K562 (cell line): ENCODE measurements at regions of chr11 and their contacts with region 1.

Region 1: GRCh38 chr11:46593550-46594373 is at the start of gene AMBRA1:
- DNase-seq: peak; percentile 76 to 96 (median 82)
- ATAC-seq: peak; percentile 86
- H3K4me3 ChIP-seq: peak within 1 kb of the TSS; percentile 97
- H3K27ac ChIP-seq: peak within 1 kb of the TSS; percentile 78
- H3K4me1 ChIP-seq: peaks cover 25 to 38% of the 10 kb centered on the region in 2 experiments
- H3K27me3 ChIP-seq: no peaks in the 10 kb centered on the region
- CTCF ChIP-seq: peak in 1 of 3 experiments; percentile 7; a peak in 1 of 6 replicates
- EP300 ChIP-seq: peak; percentile 61
- POLR2A ChIP-seq: peak; percentile 84
- RAD21 ChIP-seq: no peak; a peak in 1 of 4 replicates
- polyA plus RNA-seq, gene AMBRA1: 0.15 to 0.39 TPM

Region 2: DNA sequence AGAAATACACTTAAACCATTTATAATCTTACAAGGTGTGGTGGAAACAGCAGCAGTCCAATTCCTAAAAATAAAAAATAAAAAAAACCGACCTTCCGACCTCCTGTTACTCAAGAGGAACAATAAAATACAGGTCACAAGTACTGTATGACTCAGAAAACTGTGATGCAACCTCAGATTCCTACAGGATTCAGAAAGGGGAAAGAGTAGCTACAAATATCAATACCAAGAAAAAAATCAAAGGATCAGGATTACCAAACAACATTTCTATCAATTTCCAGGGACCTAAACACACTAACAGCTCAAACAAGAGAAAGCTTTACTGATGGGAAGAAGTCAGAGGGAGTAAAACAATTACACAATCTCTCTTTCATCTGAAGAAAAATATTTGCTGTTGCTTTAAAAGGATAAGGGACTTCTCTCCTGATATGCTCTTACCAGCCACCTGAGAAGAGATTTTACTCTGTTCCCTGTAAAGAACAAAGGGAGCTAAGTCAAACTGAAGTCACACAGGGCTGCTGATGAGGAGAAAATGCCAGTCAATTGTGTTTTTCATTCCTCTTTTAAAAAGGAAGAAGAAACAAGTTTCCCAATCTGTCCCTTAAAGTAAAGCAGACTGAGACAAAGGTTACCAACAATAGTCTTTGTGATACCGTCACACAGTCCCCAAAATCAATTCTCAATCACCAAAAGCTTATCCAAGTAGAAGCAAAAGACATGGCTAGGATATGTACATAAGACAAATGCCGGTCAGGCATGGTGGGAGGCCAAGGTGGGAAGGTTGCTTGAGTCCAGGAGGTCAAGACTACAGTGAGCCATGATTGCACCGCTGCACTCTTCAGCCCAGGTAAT is 39.3 kb before region 1 on chr11:
- CTCF ChIA-PET with region 1: no interaction called
- POLR2A ChIA-PET with region 1: interaction called, 14 read pairs
- in situ Hi-C with region 1: no loop called
- intact Hi-C with region 1: loop called (anchors 5 kb)
- DNase-seq: no peak
- ATAC-seq: peak; percentile 25
- H3K4me3 ChIP-seq: no peak overlapping the region
- H3K27ac ChIP-seq: peak overlapping the region; percentile 42; the same call in 2 of the 3 replicates
- H3K4me1 ChIP-seq: peaks cover 25 to 48% of the 10 kb centered on the region in 2 experiments
- H3K27me3 ChIP-seq: no peaks in the 10 kb centered on the region
- CTCF ChIP-seq: no peak
- EP300 ChIP-seq: 0 out of 2 replicates have a peak, but pooled peaks have one; percentile 50
- POLR2A ChIP-seq: no peak
- RAD21 ChIP-seq: no peak

Region 3: DNA sequence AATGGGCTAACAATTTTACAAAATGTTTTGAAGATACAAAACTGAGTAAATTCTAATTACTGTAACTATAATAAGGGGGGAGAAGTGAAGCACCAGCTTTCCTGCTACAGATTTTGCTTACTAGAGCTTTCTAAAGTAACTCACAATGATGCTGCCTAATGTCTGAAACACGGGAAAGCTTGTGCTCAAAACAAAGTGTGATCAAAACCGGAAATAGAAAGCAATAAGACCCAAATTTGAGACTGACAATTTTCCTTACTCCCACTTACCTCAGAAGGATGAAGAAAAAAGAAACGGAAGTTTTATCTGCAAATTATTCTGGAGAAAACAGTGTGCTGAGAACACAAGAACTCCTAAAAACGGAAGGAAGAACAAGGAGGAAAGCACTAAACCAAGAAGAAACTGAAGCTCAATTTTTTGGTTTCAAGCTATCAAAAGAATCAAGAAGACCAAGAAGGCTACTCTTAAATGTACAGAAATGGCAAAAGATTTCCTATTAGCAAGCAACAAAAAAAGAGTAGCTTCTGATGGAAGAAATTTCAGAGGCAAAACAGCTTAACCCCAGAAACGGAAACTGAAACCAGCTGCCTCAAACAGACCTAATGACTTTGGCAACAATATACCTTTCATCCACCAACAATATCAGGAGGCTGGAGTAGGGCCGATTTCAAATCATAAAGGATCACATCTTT is 33.3 kb before region 1 on chr11:
- CTCF ChIA-PET with region 1: no interaction called
- POLR2A ChIA-PET with region 1: interaction called, 14 read pairs
- in situ Hi-C with region 1: no loop called
- intact Hi-C with region 1: loop called (anchors 5 kb)
- DNase-seq: peak in 1 of 4 experiments; percentile 29
- ATAC-seq: peak; percentile 39
- H3K4me3 ChIP-seq: peak overlapping the region; percentile 20
- H3K27ac ChIP-seq: peak overlapping the region; percentile 70
- H3K4me1 ChIP-seq: peaks cover 17 to 27% of the 10 kb centered on the region in 2 experiments
- H3K27me3 ChIP-seq: no peaks in the 10 kb centered on the region
- CTCF ChIP-seq: no peak
- EP300 ChIP-seq: no peak
- POLR2A ChIP-seq: no peak
- RAD21 ChIP-seq: no peak

Region 4: DNA sequence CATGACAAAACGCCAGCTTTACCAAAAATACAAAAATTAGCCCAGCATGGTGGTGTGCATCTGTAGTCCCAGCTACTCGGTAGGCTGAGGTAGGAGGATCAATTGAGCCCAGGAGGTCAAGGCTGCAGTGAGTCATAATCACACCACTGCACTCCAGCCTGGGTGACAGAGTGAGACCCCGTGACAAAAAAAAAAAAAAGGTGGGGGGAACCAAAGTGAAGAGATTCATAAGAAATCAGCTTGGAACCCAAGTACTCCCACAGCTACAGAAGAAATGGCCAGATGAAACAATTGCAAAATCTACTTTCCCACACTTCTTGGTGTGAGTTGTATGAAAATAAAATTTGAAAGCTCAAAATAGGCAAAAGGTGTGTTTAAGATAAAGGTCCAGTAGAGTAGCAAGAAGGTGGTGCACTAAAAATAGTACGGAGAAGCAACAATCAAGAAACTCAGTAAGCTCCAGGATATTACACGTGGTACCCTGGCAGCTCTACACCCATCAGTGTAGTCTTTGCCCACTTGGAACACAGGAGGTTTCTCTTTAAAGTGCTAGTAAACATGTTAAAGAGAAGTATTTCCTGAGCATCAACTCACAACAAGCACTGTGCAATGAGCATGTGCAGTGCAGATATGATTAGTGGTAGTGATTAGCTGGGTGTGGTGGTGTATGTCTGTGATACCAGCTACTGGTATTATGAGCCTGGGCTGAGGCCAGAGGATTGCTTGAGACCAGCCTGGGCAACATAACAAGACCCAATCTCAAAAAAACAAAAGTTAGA is 18.0 kb after region 1 on chr11:
- CTCF ChIA-PET with region 1: no interaction called
- POLR2A ChIA-PET with region 1: interaction called, 21 read pairs
- in situ Hi-C with region 1: no loop called
- intact Hi-C with region 1: loop called (anchors 2 kb)
- DNase-seq: peak in 2 of 4 experiments; percentile 51 to 64
- ATAC-seq: peak; percentile 71
- H3K4me3 ChIP-seq: no peak overlapping the region
- H3K27ac ChIP-seq: peak overlapping the region; percentile 21; the same call in 2 of the 3 replicates
- H3K4me1 ChIP-seq: peaks cover 25 to 27% of the 10 kb centered on the region in 2 experiments; a peak in 4 of 5 replicates
- H3K27me3 ChIP-seq: no peaks in the 10 kb centered on the region
- CTCF ChIP-seq: no peak
- EP300 ChIP-seq: peak; percentile 67; the same call in 1 of the 2 replicates
- POLR2A ChIP-seq: no peak
- RAD21 ChIP-seq: no peak

Region 5: GRCh38 chr11:46616998-46617675 is 23.4 kb after region 1 on chr11 and contains the starts of genes ATG13 and HARBI1:
- CTCF ChIA-PET with region 1: interaction called, 4 read pairs
- POLR2A ChIA-PET with region 1: interaction called, 21 read pairs
- in situ Hi-C with region 1: no loop called
- intact Hi-C with region 1: loop called (anchors 2 kb)
- DNase-seq: peak; percentile 89 to 92 (median 91)
- ATAC-seq: peak; percentile 92
- H3K4me3 ChIP-seq: peak within 1 kb of the TSS; percentile 99
- H3K27ac ChIP-seq: peak within 1 kb of the TSS; percentile 100
- H3K4me1 ChIP-seq: peaks cover 17 to 18% of the 10 kb centered on the region in 2 experiments; a peak in 4 of 5 replicates
- H3K27me3 ChIP-seq: no peaks in the 10 kb centered on the region
- CTCF ChIP-seq: no peak
- EP300 ChIP-seq: peak; percentile 99
- POLR2A ChIP-seq: 0 out of 2 replicates have a peak, but pooled peaks have one; percentile 71
- RAD21 ChIP-seq: no peak
- polyA plus RNA-seq, gene ATG13: 13.1 to 15.6 TPM
- polyA plus RNA-seq, gene HARBI1: 6.0 to 8.4 TPM